Cardiac septum (tissue), 1 donor: ENCODE measurements at regions of chr19 and their contacts with region 1.

Region 1: DNA sequence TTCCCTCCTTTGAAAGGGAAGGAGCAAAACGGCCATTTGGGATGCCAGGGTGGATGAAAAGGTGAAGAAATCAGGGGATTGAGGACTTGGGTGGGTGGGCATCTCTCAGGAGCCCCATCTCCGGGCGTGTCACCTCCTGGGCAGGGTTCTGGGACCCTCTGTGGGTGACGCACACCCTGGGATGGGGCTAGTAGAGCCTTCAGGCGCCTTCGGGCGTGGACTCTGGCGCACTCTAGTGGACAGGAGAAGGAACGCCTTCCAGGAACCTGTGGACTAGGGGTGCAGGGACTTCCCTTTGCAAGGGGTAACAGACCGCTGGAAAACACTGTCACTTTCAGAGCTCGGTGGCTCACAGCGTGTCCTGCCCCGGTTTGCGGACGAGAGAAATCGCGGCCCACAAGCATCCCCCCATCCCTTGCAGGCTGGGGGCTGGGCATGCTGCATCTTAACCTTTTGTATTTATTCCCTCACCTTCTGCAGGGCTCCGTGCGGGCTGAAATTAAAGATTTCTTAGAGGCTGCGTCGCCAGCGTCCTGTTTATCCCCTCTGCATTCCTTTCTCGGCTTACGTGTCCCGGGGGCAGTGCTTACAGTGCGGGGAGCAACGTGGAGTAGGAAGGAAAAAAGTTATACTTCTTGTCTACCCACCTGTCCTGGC is 15.2 kb upstream of the S1PR4 start:
- DNase-seq: peak; percentile 91

Region 2: DNA sequence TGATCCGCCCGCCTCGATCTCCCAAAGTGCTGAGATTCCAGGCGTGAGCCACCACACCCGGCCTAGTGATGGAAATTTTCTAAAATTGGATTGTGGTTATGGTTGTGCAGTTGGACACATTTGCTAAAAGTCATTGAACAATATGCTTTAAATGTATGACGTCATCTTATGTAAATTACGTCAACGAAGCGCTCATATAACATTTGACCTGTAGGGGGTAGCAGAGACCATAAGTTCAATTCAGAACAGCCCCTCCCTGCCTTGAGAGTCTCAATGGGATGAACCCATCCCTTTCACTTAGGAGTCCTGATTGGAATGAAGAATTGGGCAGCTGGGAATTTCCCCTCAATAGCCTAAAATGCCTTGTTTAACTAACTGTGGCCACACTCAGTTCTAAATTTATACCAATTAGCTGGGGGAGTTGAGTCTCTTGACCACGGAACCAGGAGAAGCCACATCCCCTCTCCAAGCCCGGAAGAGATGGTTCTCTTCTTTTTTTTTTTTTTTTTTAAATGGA is 201.3 kb before region 1 on chr19:
- intact Hi-C with region 1: loop called (anchors 5 kb)
- DNase-seq: no peak

Region 3: DNA sequence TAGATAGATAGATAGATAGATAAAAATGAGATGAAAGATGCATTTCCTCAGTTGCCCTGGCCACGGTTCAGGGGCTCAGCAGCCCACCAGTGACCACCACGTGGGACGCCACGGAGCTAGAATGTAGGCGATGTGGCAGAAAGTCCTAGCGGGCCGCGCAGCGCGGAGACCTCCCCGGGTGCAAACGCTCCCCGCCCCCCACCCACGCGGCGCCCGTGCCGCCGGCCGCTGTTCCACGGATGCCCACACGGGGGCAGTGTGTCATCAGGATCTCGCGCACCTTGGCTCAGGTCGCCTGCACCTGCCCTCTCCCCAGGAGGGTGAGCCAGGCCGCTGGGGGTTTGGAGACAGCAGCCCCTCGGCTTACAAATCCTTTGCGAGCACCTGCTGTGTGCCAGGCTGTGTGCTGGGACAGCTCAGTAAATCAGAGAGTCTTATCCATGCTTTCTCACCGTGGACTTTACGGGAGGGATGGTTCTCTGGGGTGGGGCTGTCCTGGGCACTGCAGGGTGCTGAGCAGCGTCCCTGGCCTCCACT is 87.4 kb before region 1 on chr19:
- intact Hi-C with region 1: loop called (anchors 5 kb)
- DNase-seq: peak; percentile 87

Region 4: DNA sequence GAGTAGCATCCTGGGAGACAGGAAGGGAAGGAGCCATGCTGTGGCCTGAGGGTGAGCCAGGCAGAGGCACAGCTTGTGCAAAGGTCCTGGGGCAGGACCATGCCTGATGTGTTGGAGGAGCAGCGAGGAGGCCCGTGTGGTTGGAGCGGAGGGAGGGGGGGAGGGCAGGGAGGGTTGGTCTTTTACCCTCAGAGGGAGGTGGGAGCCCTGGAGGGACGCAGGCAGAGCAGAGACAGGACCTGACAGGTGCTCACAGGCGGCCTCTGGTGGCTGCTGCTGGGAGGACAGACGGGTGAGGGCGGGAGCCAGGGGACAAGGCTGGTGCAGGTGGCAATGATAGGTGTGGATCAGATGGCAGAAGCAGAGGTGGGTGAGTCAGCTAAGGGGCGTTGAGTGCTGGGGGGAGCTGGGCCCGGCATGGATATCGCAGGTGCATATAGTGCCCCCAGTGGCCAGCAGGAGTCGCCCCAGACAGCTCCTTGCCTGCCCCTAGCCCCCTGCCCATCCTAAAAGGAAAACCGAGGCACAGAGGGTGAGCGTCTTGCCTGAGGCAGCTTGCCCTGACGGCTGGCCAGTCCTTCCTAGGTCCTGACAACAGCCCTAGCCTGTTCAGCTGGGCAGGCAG is 37.3 kb before region 1 on chr19:
- intact Hi-C with region 1: loop called (anchors 5 kb)
- DNase-seq: peak; percentile 86

Region 5: DNA sequence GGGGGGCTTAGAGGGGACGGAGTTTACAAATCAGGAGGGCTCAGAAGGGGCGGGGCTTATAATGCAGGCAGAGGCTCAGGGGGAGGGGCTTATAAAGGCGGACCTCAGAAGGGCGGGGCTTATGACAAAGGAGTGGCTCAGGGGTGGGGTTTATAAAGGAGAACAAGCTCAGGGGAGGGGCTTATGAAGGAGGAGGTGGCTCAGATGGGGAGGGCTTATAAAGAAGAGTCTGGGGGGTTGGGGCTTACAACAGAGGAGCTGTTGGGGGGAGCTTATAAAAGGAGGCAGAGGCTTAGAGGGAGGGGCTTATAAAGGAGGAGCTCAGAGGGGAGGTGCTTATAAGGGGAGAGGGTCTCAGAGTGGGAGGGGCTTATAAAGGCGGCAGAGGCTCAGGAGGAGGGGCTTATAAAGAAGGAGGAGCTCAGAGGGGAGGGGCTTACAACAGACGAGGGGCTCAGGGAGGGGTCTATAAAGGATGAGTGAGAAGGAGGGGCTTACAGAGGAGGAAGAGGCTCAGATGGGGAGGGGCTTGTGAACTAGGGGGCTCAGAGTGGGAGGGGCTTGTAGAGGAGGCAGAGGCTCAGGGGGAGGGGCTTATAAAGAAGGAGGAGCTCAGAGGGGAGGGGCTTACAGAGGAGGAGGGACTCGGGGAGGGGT is 315.9 kb after region 1 on chr19:
- intact Hi-C with region 1: no loop called
- DNase-seq: no peak